Mammary epithelial cell (primary cell): ENCODE measurements at regions of chr9 and their contacts with region 1.

Region 1: DNA sequence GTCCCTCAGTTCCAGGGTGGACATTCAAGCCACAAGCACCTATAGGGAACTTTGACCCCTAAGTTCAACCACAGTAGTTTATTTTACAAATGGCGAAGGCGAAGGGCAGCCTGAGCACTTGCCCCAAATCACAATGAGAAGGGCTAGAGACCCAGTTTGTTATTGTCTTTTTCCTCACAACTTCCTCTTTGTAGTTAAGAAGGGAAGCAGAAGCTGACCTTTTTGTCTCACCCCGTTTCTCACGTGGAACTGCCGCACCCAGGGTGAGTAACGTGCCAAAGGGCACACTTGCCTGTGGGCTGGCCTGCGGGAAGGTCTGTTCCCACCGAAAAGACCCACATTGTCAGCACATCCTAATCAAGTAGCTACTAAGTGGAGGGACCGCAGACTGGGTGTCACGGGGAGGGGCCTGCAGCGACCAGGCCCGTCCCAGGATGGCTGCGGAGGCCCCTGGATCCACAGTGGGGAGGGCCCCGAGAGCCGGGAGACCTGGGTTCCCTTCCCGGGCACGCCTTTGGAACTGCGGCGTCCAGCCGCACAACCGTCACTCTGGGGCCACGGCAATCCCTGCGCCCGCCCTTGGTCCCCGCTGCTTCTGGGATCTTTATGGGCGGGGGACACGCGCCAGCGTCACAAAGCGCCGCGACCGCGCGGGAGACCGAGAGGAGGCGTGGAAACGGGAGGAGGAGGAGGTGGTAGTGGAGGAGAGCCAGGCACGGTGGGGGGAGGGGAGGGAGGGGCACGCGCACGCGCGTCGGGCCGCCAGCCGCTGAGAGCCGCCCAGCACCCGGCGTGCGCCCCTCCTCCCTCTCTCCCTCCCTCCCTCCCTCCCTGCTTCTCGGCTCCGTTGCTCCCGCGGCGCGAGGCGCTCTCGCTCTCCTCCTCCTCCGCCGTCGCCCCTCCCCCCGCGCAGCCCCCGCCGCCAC is at the start of gene UBE2R2:
- DNase-seq: peak; percentile 87
- H3K4me3 ChIP-seq: peak within 1 kb of the TSS; percentile 79 to 85 (median 81)
- H3K27ac ChIP-seq: peak within 1 kb of the TSS; percentile 88
- H3K4me1 ChIP-seq: peaks cover 36% of the 10 kb centered on the region
- H3K27me3 ChIP-seq: no peaks in the 10 kb centered on the region
- CTCF ChIP-seq: no peak
- total RNA-seq, gene UBE2R2: 14.8 to 38.0 TPM

Region 2: DNA sequence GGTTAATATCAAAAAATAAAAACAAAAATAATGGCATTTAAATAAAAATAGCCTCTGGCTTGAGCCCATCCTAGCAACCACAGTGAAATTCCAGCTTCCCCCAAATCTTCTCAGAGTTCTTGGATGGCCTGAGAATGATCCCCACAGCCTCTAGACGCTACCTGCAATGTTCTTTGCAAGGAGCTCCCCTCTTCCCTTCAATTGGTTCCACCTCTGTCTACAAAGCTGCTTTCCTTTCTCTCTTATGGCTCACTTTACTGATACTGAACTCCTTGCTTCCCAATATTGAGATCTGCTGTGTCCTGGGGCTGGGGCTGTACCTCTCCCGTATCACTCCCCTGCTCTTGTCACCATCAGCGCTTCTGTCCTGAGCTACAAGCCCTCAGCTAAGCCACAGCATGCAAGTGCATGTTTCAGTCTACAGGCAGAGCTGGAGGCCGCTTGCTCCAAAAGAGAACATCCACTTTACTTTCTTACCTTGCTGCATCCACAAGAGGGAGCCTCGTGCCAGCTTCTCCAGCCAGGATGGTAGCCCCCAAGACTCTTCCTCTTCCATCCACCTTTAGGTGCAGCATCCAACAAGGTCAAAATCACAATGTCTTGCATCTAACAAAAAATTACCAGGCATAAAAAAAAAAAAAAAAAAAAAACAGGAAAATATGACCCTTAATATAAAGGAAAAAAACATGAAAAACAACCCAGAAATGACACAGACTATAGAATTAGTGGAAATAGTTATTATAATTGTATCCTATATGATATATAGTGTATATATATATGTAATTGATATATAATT is 78.6 kb before region 1 on chr9:
- CTCF ChIA-PET with region 1: no interaction called
- dilution Hi-C with region 1: no loop called
- in situ Hi-C with region 1: no loop called
- intact Hi-C with region 1: loop called (anchors 1 kb)
- DNase-seq: peak; percentile 60
- H3K4me3 ChIP-seq: no peak overlapping the region
- H3K27ac ChIP-seq: no peak overlapping the region
- H3K4me1 ChIP-seq: peaks cover 10% of the 10 kb centered on the region
- H3K27me3 ChIP-seq: no peaks in the 10 kb centered on the region
- CTCF ChIP-seq: peak; percentile 74 to 89

Region 3: DNA sequence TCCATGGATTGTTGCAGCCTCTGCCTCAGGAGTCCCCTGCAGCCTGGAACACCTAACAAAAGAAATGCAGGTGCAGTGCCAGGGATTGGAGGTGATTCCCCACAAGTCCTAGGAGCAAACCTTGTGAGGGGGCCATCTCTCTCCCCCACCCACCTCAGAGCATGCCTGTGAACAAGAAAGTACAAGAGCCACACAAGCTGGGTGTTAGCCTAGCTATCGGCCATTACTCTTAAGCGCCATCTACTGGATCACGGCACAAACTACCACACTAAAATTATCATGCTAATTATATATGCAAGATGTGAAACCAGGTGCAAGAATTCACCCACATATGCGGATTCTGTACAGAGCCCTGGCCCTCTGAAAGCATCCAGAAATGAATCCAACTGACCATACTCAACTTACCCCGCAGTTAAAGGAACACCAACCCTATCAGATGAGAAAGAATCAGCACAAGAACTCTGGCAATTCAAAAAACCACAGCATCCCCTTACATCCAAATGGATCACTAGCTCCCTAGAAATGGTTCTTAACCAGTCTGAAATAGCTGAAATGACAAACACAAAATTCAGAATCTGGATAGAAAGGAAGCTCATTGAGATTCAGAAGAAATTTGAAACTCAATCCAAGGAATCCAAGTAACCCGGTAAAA is 37.8 kb before region 1 on chr9:
- CTCF ChIA-PET with region 1: interaction called, 8 read pairs
- dilution Hi-C with region 1: no loop called
- in situ Hi-C with region 1: no loop called
- intact Hi-C with region 1: loop called (anchors 2 kb)
- DNase-seq: peak; percentile 55
- H3K4me3 ChIP-seq: no peak overlapping the region
- H3K27ac ChIP-seq: no peak overlapping the region
- H3K4me1 ChIP-seq: peaks cover 30% of the 10 kb centered on the region
- H3K27me3 ChIP-seq: no peaks in the 10 kb centered on the region
- CTCF ChIP-seq: peak; percentile 67 to 85

Region 4: DNA sequence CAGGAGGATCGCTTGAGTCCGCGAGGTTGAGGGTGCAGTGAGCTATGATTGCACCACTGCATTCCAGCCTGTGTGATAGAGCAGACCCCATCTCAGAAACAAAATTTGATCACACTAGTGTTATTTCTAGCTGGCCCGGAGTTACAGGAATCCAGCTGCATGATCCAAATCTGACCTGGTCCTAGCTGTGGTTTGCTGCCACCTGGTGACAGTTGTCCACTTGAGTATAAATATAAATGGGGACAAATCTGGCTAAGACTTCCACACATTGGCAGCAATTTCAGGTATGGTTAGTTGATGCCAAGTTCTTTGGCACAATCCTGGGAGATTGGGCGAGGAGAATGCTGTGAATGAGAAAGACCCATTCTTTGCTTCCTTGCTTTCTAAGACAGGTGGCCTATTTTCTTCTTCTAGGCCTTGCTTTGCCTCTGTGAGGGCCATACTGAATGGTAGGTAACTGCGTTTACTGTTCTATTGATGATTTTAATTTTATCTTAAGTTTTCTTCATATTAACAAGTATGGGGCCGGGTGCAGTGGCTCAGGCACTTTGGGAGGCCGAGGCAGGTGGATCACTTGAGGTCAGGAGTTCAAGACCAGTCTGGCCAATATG is 35.7 kb after region 1 on chr9:
- CTCF ChIA-PET with region 1: interaction called, 6 read pairs
- dilution Hi-C with region 1: no loop called
- in situ Hi-C with region 1: loop called in 1 of 2 experiments (anchors 5 kb)
- intact Hi-C with region 1: loop called (anchors 1 kb)
- DNase-seq: peak; percentile 41
- H3K4me3 ChIP-seq: no peak overlapping the region
- H3K27ac ChIP-seq: no peak overlapping the region
- H3K4me1 ChIP-seq: no peaks in the 10 kb centered on the region
- H3K27me3 ChIP-seq: no peaks in the 10 kb centered on the region
- CTCF ChIP-seq: peak; percentile 41 to 74

Region 5: DNA sequence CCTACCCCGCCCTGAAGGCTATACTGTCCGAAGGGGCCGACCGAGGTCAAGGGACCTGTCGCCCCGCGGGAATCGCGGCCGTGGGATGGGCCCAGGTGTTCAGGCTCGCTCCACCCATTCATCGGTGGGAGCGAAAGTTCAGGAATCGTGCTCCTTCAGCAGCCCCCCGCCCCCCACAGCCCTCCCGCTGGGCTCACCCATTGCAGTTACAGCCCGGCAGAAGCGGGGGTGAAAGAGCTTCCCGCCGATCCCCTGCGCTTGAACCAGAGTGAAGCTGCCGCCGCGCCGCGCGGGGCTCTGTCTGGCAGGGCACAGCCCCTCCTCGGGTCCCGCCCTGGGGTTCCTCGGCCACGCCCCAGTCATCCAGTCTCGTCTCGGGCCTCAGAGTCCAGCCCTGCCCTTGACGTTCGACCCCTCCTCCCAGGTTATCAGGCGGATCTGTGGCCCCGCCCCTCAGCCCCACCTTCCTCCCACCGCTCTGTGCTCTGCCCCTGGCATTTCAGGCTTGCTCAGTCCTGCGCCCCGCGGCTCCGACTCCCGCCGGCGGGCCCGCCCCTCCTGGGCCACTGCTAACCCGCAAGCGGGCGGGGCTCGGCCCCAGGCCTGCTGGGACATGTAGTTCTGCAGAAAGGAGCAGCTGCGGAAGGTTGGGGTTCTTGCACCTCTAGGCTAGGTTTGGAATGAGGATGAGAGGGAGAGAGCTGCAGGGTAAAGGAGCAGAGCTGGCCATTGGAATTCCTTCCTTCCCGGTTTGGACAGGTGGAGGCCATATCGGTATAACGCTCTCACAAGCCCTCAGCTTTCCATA is 560.2 kb after region 1 on chr9 and contains the start of gene MYORG:
- CTCF ChIA-PET with region 1: no interaction called
- dilution Hi-C with region 1: no loop called
- in situ Hi-C with region 1: no loop called
- intact Hi-C with region 1: loop called (anchors 10 kb)
- DNase-seq: peak; percentile 98
- H3K4me3 ChIP-seq: peak within 1 kb of the TSS; percentile 73 to 85 (median 84)
- H3K27ac ChIP-seq: peak within 1 kb of the TSS; percentile 42
- H3K4me1 ChIP-seq: peaks cover 39% of the 10 kb centered on the region
- H3K27me3 ChIP-seq: no peaks in the 10 kb centered on the region
- CTCF ChIP-seq: no peak
- total RNA-seq, gene MYORG: 23.8 to 35.0 TPM